CD8-positive, alpha-beta memory T cell (primary cell): ENCODE measurements at regions of chr17 and their contacts with region 1.

Region 1: GRCh38 chr17:47895856-47896671 is at the start of gene SP2:
- DNase-seq: peak; percentile 96 to 100 (median 100)
- H3K4me3 ChIP-seq: peak within 1 kb of the TSS; percentile 85
- H3K4me3 Mint-ChIP-seq: peak within 1 kb of the TSS; percentile 92 to 99 (median 95)
- H3K27ac ChIP-seq: peak within 1 kb of the TSS; percentile 91
- H3K27ac Mint-ChIP-seq: peak within 1 kb of the TSS; percentile 95 to 100 (median 99)
- H3K4me1 ChIP-seq: peaks cover 30% of the 10 kb centered on the region
- H3K4me1 Mint-ChIP-seq: peaks cover 40 to 63% (median 54%) of the 10 kb centered on the region in 3 donors
- H3K27me3 ChIP-seq: no peaks in the 10 kb centered on the region
- H3K27me3 Mint-ChIP-seq: peaks cover 0 to 1% of the 10 kb centered on the region in 2 donors
- total RNA-seq, gene SP2: 21.5 to 22.1 TPM

Region 2: DNA sequence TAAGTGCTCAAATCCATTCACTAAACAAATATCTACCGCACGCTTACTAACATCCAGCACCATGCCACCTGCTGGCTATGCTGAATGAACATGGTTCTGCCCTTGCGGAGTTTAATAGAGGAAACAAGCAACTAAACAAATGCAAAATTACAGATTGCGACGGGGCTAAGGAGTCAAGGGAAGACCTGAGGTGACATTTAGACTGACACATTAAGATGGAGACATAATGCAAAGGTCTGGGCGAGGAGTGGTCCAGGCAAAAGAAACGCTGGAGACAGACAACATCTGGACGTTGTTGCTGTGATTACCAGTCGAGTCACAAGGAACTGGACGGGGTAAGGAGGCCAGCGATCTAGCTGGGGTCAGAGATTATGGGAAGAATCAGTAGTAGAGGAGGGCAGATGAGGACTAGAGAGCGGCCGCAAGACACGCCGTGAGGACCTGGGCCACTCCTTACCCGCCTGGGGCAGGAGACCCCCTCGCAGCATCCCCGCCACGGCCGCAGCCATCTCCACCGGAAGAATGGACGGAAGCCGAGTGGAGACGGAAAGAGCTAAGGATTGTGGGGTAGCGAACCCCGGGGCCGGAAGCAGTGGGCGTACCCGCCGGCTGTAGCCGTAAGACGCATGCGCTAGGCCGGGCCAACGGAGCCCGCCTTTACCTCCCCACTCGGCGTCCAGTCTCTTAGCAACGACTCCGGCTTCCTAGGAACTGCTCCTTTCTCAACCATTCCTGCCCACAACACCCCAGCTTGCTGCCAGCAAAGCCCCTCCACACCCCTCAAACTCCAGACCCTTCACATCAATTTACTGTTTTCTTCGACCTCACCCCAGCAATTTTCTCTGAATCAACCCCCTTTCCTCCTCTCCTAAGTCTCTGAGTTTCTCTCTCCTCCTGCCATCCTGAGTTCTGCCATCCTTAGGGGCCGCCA is 64.8 kb before region 1 on chr17 and contains the starts of genes LRRC46 and MRPL10:
- CTCF ChIA-PET with region 1: interaction called, 5 read pairs
- POLR2A ChIA-PET with region 1: interaction called, 22 read pairs
- DNase-seq: peak; percentile 87 to 94 (median 90)
- H3K4me3 ChIP-seq: peak within 1 kb of the TSS; percentile 98
- H3K4me3 Mint-ChIP-seq: peak within 1 kb of the TSS; percentile 92 to 99 (median 95)
- H3K27ac ChIP-seq: peak within 1 kb of the TSS; percentile 98
- H3K27ac Mint-ChIP-seq: peak within 1 kb of the TSS; percentile 95 to 100 (median 100)
- H3K4me1 ChIP-seq: peaks cover 59% of the 10 kb centered on the region
- H3K4me1 Mint-ChIP-seq: peaks cover 50 to 78% (median 59%) of the 10 kb centered on the region in 3 donors
- H3K27me3 ChIP-seq: no peaks in the 10 kb centered on the region
- H3K27me3 Mint-ChIP-seq: peaks cover 0 to 4% of the 10 kb centered on the region in 2 donors
- total RNA-seq, gene LRRC46: 0.49 to 0.83 TPM
- total RNA-seq, gene MRPL10: 67.0 to 67.7 TPM

Region 3: GRCh38 chr17:47840740-47841603 is 55.1 kb before region 1 on chr17 and contains the start of gene SCRN2:
- CTCF ChIA-PET with region 1: interaction called, 314 read pairs
- POLR2A ChIA-PET with region 1: interaction called, 18 read pairs
- DNase-seq: peak; percentile 79 to 88 (median 83)
- H3K4me3 ChIP-seq: peak within 1 kb of the TSS; percentile 73
- H3K4me3 Mint-ChIP-seq: peak within 1 kb of the TSS; percentile 80 to 97 (median 94)
- H3K27ac ChIP-seq: peak within 1 kb of the TSS; percentile 77
- H3K27ac Mint-ChIP-seq: peak within 1 kb of the TSS; percentile 44 to 98 (median 85)
- H3K4me1 ChIP-seq: peaks cover 32% of the 10 kb centered on the region
- H3K4me1 Mint-ChIP-seq: peaks cover 23 to 34% (median 28%) of the 10 kb centered on the region in 3 donors
- H3K27me3 ChIP-seq: peaks cover 8% of the 10 kb centered on the region
- H3K27me3 Mint-ChIP-seq: peaks cover 4 to 29% of the 10 kb centered on the region in 2 donors
- total RNA-seq, gene SCRN2: 17.3 to 18.0 TPM

Region 4: GRCh38 chr17:47941236-47941994 is 45.4 kb after region 1 on chr17 and contains the start of gene PNPO:
- CTCF ChIA-PET with region 1: interaction called, 4 read pairs
- POLR2A ChIA-PET with region 1: interaction called, 17 read pairs
- DNase-seq: peak; percentile 88 to 96 (median 93)
- H3K4me3 ChIP-seq: peak within 1 kb of the TSS; percentile 88
- H3K4me3 Mint-ChIP-seq: peak within 1 kb of the TSS; percentile 59 to 91 (median 86)
- H3K27ac ChIP-seq: peak within 1 kb of the TSS; percentile 81
- H3K27ac Mint-ChIP-seq: peak within 1 kb of the TSS; percentile 53 to 96 (median 92)
- H3K4me1 ChIP-seq: peaks cover 43% of the 10 kb centered on the region
- H3K4me1 Mint-ChIP-seq: peaks cover 33 to 57% (median 49%) of the 10 kb centered on the region in 3 donors
- H3K27me3 ChIP-seq: no peaks in the 10 kb centered on the region
- H3K27me3 Mint-ChIP-seq: no peaks in the 10 kb centered on the region
- total RNA-seq, gene PNPO: 55.5 to 57.7 TPM

Region 5: GRCh38 chr17:47970704-47971463 is 74.8 kb after region 1 on chr17 and contains the start of gene CDK5RAP3:
- CTCF ChIA-PET with region 1: interaction called, 14 read pairs
- POLR2A ChIA-PET with region 1: interaction called, 18 read pairs
- DNase-seq: peak; percentile 97 to 98 (median 98)
- H3K4me3 ChIP-seq: peak within 1 kb of the TSS; percentile 74
- H3K4me3 Mint-ChIP-seq: peak within 1 kb of the TSS; percentile 98 to 100 (median 99)
- H3K27ac ChIP-seq: peak within 1 kb of the TSS; percentile 73
- H3K27ac Mint-ChIP-seq: peak within 1 kb of the TSS; percentile 90 to 99 (median 94)
- H3K4me1 ChIP-seq: peaks cover 14% of the 10 kb centered on the region
- H3K4me1 Mint-ChIP-seq: peaks cover 26 to 37% (median 33%) of the 10 kb centered on the region in 3 donors
- H3K27me3 ChIP-seq: no peaks in the 10 kb centered on the region
- H3K27me3 Mint-ChIP-seq: peaks cover 0 to 1% of the 10 kb centered on the region in 2 donors
- total RNA-seq, gene CDK5RAP3: 178 to 184 TPM

Region 6: DNA sequence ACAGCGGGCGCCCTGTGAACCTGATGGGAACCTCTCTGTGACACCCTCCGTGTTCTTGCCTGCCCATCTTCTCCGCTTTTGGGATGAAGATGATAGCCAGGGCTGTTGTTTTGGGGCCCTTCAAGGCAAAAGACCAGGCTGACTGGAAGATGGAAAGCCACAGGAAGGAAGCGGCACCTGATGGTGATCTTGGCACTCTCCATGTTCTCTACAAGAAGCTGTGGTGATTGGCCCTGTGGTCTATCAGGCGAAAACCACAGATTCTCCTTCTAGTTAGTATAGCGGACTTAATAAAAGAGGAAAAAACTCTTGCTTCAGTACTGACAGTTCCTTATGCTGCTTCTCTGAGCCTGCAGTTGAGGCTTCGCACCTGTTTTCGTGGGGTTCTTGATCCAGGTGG is 85.4 kb after region 1 on chr17:
- CTCF ChIA-PET with region 1: no interaction called
- POLR2A ChIA-PET with region 1: no interaction called
- DNase-seq: no peak
- H3K4me3 ChIP-seq: no peak overlapping the region
- H3K4me3 Mint-ChIP-seq: peak overlapping the region in 4 of 7 donors; percentile 3 to 47 (median 16)
- H3K27ac ChIP-seq: peak overlapping the region; percentile 38
- H3K27ac Mint-ChIP-seq: peak overlapping the region in 3 of 8 donors; percentile 24 to 35 (median 32)
- H3K4me1 ChIP-seq: peaks cover 10% of the 10 kb centered on the region
- H3K4me1 Mint-ChIP-seq: peaks cover 4 to 28% (median 15%) of the 10 kb centered on the region in 3 donors
- H3K27me3 ChIP-seq: no peaks in the 10 kb centered on the region
- H3K27me3 Mint-ChIP-seq: no peaks in the 10 kb centered on the region